Activated CD4-positive, alpha-beta memory T cell treated with anti-CD3 and anti-CD28 coated beads, Interleukin-2, amount 10 ng/mL, durations not matched to agents 7 days and 5 days (primary cell): ENCODE measurements at regions of chr12 and their contacts with region 1.

Region 1: DNA sequence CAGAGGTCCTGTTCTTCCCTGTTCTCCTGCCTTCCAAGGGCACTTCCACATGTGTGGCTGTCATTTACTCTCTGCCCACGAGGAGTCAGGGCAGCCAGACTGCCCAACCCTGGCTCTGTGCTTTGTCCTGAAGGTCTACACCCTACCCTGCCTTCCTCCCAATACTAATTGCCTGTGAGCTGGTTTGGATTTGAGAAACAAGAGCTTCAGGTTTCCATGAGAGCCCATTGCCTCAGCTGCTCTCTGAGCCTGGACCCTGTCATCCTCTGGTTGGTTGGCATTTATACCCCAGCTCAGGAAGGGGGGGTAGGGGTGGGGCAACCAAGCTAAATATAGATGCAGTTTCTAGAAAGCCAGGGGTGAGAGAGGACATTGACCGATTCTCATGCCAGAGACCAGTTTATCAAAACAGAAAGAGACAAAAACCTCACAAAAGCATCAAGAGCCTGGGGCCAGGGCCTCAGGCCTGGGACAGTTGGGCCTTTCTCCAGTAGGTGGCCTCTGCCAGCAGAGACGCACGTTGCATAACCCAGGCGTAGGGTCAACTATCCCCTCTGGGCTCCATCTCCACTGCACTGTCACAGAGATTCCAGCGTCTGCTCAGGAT is 34.5 kb downstream of the VDR start:
- DNase-seq: no peak
- H3K4me3 Mint-ChIP-seq: no peak overlapping the region
- H3K27ac Mint-ChIP-seq: peak overlapping the region; percentile 72
- H3K4me1 Mint-ChIP-seq: peaks cover 78% of the 10 kb centered on the region
- H3K27me3 Mint-ChIP-seq: no peaks in the 10 kb centered on the region

Region 2: GRCh38 chr12:47882781-47883546 is 12.7 kb after region 1 on chr12:
- CTCF ChIA-PET with region 1: interaction called, 19 read pairs
- POLR2A ChIA-PET with region 1: interaction called, 70 read pairs
- DNase-seq: peak; percentile 59
- H3K4me3 Mint-ChIP-seq: peak overlapping the region; percentile 80
- H3K27ac Mint-ChIP-seq: peak overlapping the region; percentile 98
- H3K4me1 Mint-ChIP-seq: peaks cover 83% of the 10 kb centered on the region
- H3K27me3 Mint-ChIP-seq: no peaks in the 10 kb centered on the region

Region 3: GRCh38 chr12:47889040-47889439 is 18.8 kb after region 1 on chr12:
- CTCF ChIA-PET with region 1: interaction called, 10 read pairs
- POLR2A ChIA-PET with region 1: interaction called, 70 read pairs
- DNase-seq: peak; percentile 68
- H3K4me3 Mint-ChIP-seq: peak overlapping the region; percentile 79
- H3K27ac Mint-ChIP-seq: peak overlapping the region; percentile 96
- H3K4me1 Mint-ChIP-seq: peaks cover 94% of the 10 kb centered on the region
- H3K27me3 Mint-ChIP-seq: no peaks in the 10 kb centered on the region

Region 4: GRCh38 chr12:47904713-47905310 is 34.5 kb after region 1 on chr12 and contains the start of gene VDR:
- CTCF ChIA-PET with region 1: interaction called, 10 read pairs
- POLR2A ChIA-PET with region 1: interaction called, 39 read pairs
- DNase-seq: peak; percentile 81
- H3K4me3 Mint-ChIP-seq: peak within 1 kb of the TSS; percentile 96
- H3K27ac Mint-ChIP-seq: peak within 1 kb of the TSS; percentile 81
- H3K4me1 Mint-ChIP-seq: peaks cover 44% of the 10 kb centered on the region
- H3K27me3 Mint-ChIP-seq: peaks cover 38% of the 10 kb centered on the region
- total RNA-seq, gene VDR: 62.9 to 65.5 TPM